K562 (cell line): ENCODE measurements at regions of chr4 and their contacts with region 1.

Region 1: GRCh38 chr4:74038161-74039064 is at the start of gene CXCL3:
- DNase-seq: peak; percentile 82 to 88 (median 84)
- ATAC-seq: peak; percentile 89
- H3K4me3 ChIP-seq: peak within 1 kb of the TSS; percentile 55
- H3K27ac ChIP-seq: peak within 1 kb of the TSS; percentile 88
- H3K4me1 ChIP-seq: peaks cover 3 to 16% of the 10 kb centered on the region in 2 experiments; a peak in 3 of 5 replicates
- H3K27me3 ChIP-seq: no peaks in the 10 kb centered on the region
- CTCF ChIP-seq: peak; percentile 17 to 65 (median 53)
- EP300 ChIP-seq: no peak
- POLR2A ChIP-seq: peak; percentile 84
- RAD21 ChIP-seq: peak; percentile 64 to 68
- polyA plus RNA-seq, gene CXCL3: 2.3 to 5.0 TPM

Region 2: DNA sequence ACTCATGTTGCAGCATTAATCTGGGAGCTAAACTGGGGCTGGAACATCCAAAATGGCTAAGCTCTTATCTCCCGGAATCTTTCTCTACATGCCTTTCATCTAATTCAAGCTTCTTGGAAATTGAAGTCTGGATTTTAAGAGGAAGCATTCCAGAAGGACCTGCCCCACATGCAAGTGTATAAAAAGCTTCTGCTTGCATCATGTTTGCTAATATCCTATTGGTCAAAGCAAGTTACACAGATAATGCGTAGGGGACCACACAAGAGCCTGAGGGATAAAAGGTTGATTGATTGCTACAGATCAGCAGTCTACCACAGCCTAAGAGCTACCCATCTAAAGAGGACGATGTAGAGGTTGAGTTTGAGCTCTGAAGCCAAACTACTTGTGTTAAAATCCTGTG is 1892.2 kb before region 1 on chr4:
- CTCF ChIA-PET with region 1: no interaction called
- POLR2A ChIA-PET with region 1: no interaction called
- in situ Hi-C with region 1: no loop called
- intact Hi-C with region 1: no loop called
- DNase-seq: no peak
- ATAC-seq: no peak
- H3K4me3 ChIP-seq: no peak overlapping the region
- H3K27ac ChIP-seq: no peak overlapping the region
- H3K4me1 ChIP-seq: no peaks in the 10 kb centered on the region
- H3K27me3 ChIP-seq: no peaks in the 10 kb centered on the region
- CTCF ChIP-seq: no peak
- EP300 ChIP-seq: no peak
- POLR2A ChIP-seq: no peak
- RAD21 ChIP-seq: no peak

Region 3: GRCh38 chr4:73729534-73730165 is 308.8 kb before region 1 on chr4:
- CTCF ChIA-PET with region 1: no interaction called
- POLR2A ChIA-PET with region 1: interaction called, 4 read pairs
- in situ Hi-C with region 1: loop called (anchors 10 kb)
- intact Hi-C with region 1: loop called (anchors 10 kb)
- DNase-seq: peak; percentile 50 to 74 (median 62)
- ATAC-seq: peak; percentile 95
- H3K4me3 ChIP-seq: no peak overlapping the region
- H3K27ac ChIP-seq: no peak overlapping the region
- H3K4me1 ChIP-seq: peaks cover 0 to 25% of the 10 kb centered on the region in 2 experiments; a peak in 4 of 5 replicates
- H3K27me3 ChIP-seq: no peaks in the 10 kb centered on the region
- CTCF ChIP-seq: peak; percentile 70 to 85 (median 80)
- EP300 ChIP-seq: no peak
- POLR2A ChIP-seq: no peak
- RAD21 ChIP-seq: peak; percentile 72 to 79

Region 4: DNA sequence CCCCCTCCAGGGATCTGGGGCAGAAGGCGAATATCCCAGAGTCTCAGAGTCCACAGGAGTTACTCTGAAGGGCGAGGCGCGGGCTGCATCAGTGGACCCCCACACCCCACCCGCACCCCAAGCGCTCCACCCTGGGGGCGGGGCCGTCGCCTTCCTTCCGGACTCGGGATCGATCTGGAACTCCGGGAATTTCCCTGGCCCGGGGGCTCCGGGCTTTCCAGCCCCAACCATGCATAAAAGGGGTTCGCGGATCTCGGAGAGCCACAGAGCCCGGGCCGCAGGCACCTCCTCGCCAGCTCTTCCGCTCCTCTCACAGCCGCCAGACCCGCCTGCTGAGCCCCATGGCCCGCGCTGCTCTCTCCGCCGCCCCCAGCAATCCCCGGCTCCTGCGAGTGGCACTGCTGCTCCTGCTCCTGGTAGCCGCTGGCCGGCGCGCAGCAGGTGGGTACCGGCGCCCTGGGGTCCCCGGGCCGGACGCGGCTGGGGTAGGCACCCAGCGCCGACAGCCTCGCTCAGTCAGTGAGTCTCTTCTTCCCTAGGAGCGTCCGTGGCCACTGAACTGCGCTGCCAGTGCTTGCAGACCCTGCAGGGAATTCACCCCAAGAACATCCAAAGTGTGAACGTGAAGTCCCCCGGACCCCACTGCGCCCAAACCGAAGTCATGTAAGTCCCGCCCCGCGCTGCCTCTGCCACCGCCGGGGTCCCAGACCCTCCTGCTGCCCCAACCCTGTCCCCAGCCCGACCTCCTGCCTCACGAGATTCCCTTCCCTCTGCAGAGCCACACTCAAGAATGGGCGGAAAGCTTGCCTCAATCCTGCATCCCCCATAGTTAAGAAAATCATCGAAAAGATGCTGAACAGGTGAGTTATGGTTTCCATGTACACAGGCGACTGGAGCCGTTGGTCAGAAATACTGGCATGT is 169.0 kb before region 1 on chr4 and contains the start of gene CXCL1:
- CTCF ChIA-PET with region 1: no interaction called
- POLR2A ChIA-PET with region 1: no interaction called
- in situ Hi-C with region 1: no loop called
- intact Hi-C with region 1: loop called (anchors 2 kb)
- DNase-seq: peak; percentile 37 to 68 (median 51)
- ATAC-seq: peak; percentile 95
- H3K4me3 ChIP-seq: peak within 1 kb of the TSS; percentile 54
- H3K27ac ChIP-seq: no peak within 1 kb of the TSS
- H3K4me1 ChIP-seq: peaks cover 9 to 11% of the 10 kb centered on the region in 2 experiments; a peak in 4 of 5 replicates
- H3K27me3 ChIP-seq: no peaks in the 10 kb centered on the region
- CTCF ChIP-seq: peak in 2 of 3 experiments; percentile 49 to 69; a peak in 4 of 6 replicates
- EP300 ChIP-seq: no peak
- POLR2A ChIP-seq: no peak
- RAD21 ChIP-seq: peak in 1 of 2 experiments; percentile 32
- polyA plus RNA-seq, gene CXCL1: 0.07 TPM in 1 of 2 experiments, not detected in the other

Region 5: GRCh38 chr4:73922766-73923630 is 115.4 kb before region 1 on chr4:
- CTCF ChIA-PET with region 1: no interaction called
- POLR2A ChIA-PET with region 1: no interaction called
- in situ Hi-C with region 1: no loop called
- intact Hi-C with region 1: loop called (anchors 5 kb)
- DNase-seq: peak in 1 of 4 experiments; percentile 36
- ATAC-seq: no peak
- H3K4me3 ChIP-seq: no peak overlapping the region
- H3K27ac ChIP-seq: no peak overlapping the region
- H3K4me1 ChIP-seq: no peaks in the 10 kb centered on the region; a peak in 1 of 5 replicates
- H3K27me3 ChIP-seq: no peaks in the 10 kb centered on the region
- CTCF ChIP-seq: peak in 1 of 3 experiments; percentile 58; a peak in 3 of 6 replicates
- EP300 ChIP-seq: no peak
- POLR2A ChIP-seq: no peak
- RAD21 ChIP-seq: peak; percentile 61 to 76

Region 6: DNA sequence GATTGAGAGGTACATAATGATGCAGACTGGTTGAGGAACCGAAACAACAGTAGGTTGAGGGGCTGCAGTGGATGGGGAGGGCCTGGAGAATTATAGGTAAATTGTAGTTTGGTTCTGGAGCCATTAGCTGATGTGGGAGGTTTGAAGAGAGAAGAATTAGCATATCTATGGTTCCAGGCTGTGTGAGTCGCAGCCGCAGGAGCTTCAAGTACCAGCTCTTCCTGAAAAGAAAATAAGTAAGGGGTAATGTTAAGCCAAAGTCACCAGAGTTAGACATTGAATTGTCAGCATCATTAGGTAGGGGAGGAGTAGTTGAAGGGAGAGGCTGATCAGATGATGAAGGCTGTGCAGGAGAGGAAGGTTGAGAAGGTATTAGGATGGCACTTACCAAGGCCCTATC is 86.1 kb before region 1 on chr4:
- CTCF ChIA-PET with region 1: no interaction called
- POLR2A ChIA-PET with region 1: no interaction called
- in situ Hi-C with region 1: no loop called
- intact Hi-C with region 1: no loop called
- DNase-seq: no peak
- ATAC-seq: no peak
- H3K4me3 ChIP-seq: no peak overlapping the region
- H3K27ac ChIP-seq: no peak overlapping the region
- H3K4me1 ChIP-seq: peaks cover 0 to 5% of the 10 kb centered on the region in 2 experiments; a peak in 1 of 5 replicates
- H3K27me3 ChIP-seq: no peaks in the 10 kb centered on the region
- CTCF ChIP-seq: no peak
- EP300 ChIP-seq: no peak
- POLR2A ChIP-seq: no peak
- RAD21 ChIP-seq: no peak

Region 7: GRCh38 chr4:74056858-74057562 is 18.6 kb after region 1 on chr4:
- CTCF ChIA-PET with region 1: no interaction called
- POLR2A ChIA-PET with region 1: interaction called, 23 read pairs
- in situ Hi-C with region 1: no loop called
- intact Hi-C with region 1: loop called (anchors 2 kb)
- DNase-seq: peak; percentile 42 to 73 (median 59)
- ATAC-seq: peak; percentile 78
- H3K4me3 ChIP-seq: no peak overlapping the region
- H3K27ac ChIP-seq: peak overlapping the region; percentile 98
- H3K4me1 ChIP-seq: peaks cover 15 to 47% of the 10 kb centered on the region in 2 experiments
- H3K27me3 ChIP-seq: no peaks in the 10 kb centered on the region
- CTCF ChIP-seq: no peak
- EP300 ChIP-seq: peak; percentile 86
- POLR2A ChIP-seq: no peak
- RAD21 ChIP-seq: no peak

Region 8: DNA sequence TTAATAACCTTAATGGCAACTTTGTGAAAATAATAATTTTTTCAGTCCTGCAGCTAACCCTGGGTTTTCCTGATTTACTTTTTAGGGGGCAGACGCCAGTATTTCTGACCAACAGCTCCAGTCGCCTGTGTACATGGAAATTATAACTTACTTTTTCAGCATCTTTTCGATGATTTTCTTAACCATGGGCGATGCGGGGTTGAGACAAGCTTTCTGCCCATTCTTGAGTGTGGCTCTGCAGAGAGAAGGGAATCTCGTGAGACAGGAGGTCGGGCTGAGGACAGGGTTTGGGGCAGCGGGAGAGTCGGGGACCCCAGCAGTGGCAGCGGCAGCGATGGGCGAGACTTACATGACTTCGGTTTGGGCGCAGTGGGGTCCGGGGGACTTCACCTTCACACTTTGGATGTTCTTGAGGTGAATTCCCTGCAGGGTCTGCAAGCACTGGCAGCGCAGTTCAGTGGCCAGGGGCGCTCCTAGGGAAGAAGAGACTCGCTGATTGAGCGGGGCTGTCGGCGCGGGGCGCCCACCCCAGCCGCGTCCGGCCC is 60.1 kb after region 1 on chr4:
- CTCF ChIA-PET with region 1: no interaction called
- POLR2A ChIA-PET with region 1: interaction called, 14 read pairs
- in situ Hi-C with region 1: no loop called
- intact Hi-C with region 1: loop called (anchors 2 kb)
- DNase-seq: peak in 1 of 4 experiments; percentile 37
- ATAC-seq: no peak
- H3K4me3 ChIP-seq: peak overlapping the region; percentile 75
- H3K27ac ChIP-seq: peak overlapping the region; percentile 93
- H3K4me1 ChIP-seq: peaks cover 17 to 39% of the 10 kb centered on the region in 2 experiments; a peak in 4 of 5 replicates
- H3K27me3 ChIP-seq: no peaks in the 10 kb centered on the region
- CTCF ChIP-seq: no peak
- EP300 ChIP-seq: no peak
- POLR2A ChIP-seq: no peak
- RAD21 ChIP-seq: no peak

Region 9: GRCh38 chr4:74874753-74875367 is 836.4 kb after region 1 on chr4:
- CTCF ChIA-PET with region 1: no interaction called
- POLR2A ChIA-PET with region 1: no interaction called
- in situ Hi-C with region 1: no loop called
- intact Hi-C with region 1: no loop called
- DNase-seq: peak; percentile 46 to 72 (median 62)
- ATAC-seq: peak; percentile 94
- H3K4me3 ChIP-seq: no peak overlapping the region
- H3K27ac ChIP-seq: no peak overlapping the region
- H3K4me1 ChIP-seq: no peaks in the 10 kb centered on the region
- H3K27me3 ChIP-seq: no peaks in the 10 kb centered on the region; a peak in 1 of 5 replicates
- CTCF ChIP-seq: peak; percentile 69 to 77 (median 74)
- EP300 ChIP-seq: no peak
- POLR2A ChIP-seq: no peak
- RAD21 ChIP-seq: peak; percentile 60 to 77